WTC11 (cell line): ENCODE measurements at regions of chr6 and their contacts with region 1.

Region 1: GRCh38 chr6:4788953-4789584 is 12.9 kb downstream of the CDYL start:
- DNase-seq: peak; percentile 52
- ATAC-seq: peak; percentile 74
- H3K4me3 Mint-ChIP-seq: no peak overlapping the region
- H3K27ac Mint-ChIP-seq: no peak overlapping the region
- H3K4me1 Mint-ChIP-seq: peaks cover 56% of the 10 kb centered on the region
- H3K27me3 Mint-ChIP-seq: peaks cover 40% of the 10 kb centered on the region
- CTCF ChIP-seq: no peak

Region 2: GRCh38 chr6:4801491-4802110 is 12.5 kb after region 1 on chr6:
- CTCF ChIA-PET with region 1: interaction called, 16 read pairs
- POLR2A ChIA-PET with region 1: interaction called, 3 read pairs
- DNase-seq: no peak
- ATAC-seq: no peak
- H3K4me3 Mint-ChIP-seq: no peak overlapping the region
- H3K27ac Mint-ChIP-seq: no peak overlapping the region
- H3K4me1 Mint-ChIP-seq: peaks cover 67% of the 10 kb centered on the region
- H3K27me3 Mint-ChIP-seq: no peaks in the 10 kb centered on the region
- CTCF ChIP-seq: no peak

Region 3: GRCh38 chr6:5103250-5103649 is 314.2 kb after region 1 on chr6:
- CTCF ChIA-PET with region 1: no interaction called
- POLR2A ChIA-PET with region 1: no interaction called
- DNase-seq: no peak
- ATAC-seq: no peak
- H3K4me3 Mint-ChIP-seq: no peak overlapping the region
- H3K27ac Mint-ChIP-seq: no peak overlapping the region
- H3K4me1 Mint-ChIP-seq: peaks cover 17% of the 10 kb centered on the region
- H3K27me3 Mint-ChIP-seq: no peaks in the 10 kb centered on the region
- CTCF ChIP-seq: no peak